ENCODE measurements at regions of chr7 and their contacts with region 1.

Region 1: GRCh38 chr7:17523813-17524741 is 225.6 kb downstream of the AHR start:
- DNase-seq: no peak
- H3K4me3 ChIP-seq: no peak overlapping the region
- H3K27ac ChIP-seq: no peak overlapping the region
- H3K4me1 ChIP-seq: peaks cover 22% of the 10 kb centered on the region
- H3K27me3 ChIP-seq: no peaks in the 10 kb centered on the region
- CTCF ChIP-seq: no peak
- POLR2A ChIP-seq: no peak

Region 2: DNA sequence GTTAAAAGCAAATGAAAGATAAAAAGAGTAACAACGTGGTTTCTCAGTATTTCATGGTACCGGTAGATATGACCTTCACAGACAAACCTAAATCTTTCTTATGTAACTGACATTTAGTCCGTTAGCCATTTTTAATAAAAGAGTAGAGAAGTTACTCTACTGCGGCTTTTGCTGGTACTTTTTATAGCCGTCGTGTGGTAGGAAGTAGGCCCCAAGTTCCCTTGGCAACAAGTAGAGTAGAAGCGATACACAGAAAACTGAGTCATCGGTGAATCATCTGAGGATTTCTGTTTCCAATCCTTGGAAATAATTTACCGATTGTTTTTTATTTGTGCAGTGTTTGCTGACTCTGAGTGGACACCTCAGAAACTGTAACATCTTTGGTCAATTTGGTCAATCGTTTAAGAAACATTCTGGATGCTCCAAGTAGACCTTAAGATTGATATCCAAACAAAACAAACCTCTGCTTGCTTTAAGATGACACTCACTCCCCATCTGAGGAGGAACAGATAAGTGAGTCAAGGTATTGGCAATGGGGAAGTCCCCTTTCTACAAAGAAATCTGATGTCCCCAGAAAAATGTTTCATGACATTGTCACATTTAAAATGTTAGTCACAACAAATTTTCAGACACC is 289.6 kb before region 1 on chr7:
- CTCF ChIA-PET with region 1: no interaction called
- POLR2A ChIA-PET with region 1: no interaction called
- dilution Hi-C with region 1: no loop called
- intact Hi-C with region 1: loop called (anchors 1 kb)
- DNase-seq: peak; percentile 90
- H3K4me3 ChIP-seq: no peak overlapping the region
- H3K27ac ChIP-seq: peak overlapping the region; percentile 76
- H3K4me1 ChIP-seq: peaks cover 28% of the 10 kb centered on the region
- H3K27me3 ChIP-seq: no peaks in the 10 kb centered on the region
- CTCF ChIP-seq: no peak
- POLR2A ChIP-seq: no peak

Region 3: GRCh38 chr7:17304926-17305325 is 219.2 kb before region 1 on chr7:
- CTCF ChIA-PET with region 1: interaction called, 32 read pairs
- POLR2A ChIA-PET with region 1: interaction called, 3 read pairs
- dilution Hi-C with region 1: no loop called
- intact Hi-C with region 1: loop called (anchors 2 kb)
- DNase-seq: peak; percentile 94
- H3K4me3 ChIP-seq: peak overlapping the region in 1 of 3 experiments; percentile 27
- H3K27ac ChIP-seq: peak overlapping the region; percentile 79
- H3K4me1 ChIP-seq: peaks cover 52% of the 10 kb centered on the region
- H3K27me3 ChIP-seq: no peaks in the 10 kb centered on the region
- CTCF ChIP-seq: no peak
- POLR2A ChIP-seq: no peak

Region 4: GRCh38 chr7:17466216-17466615 is 57.9 kb before region 1 on chr7:
- CTCF ChIA-PET with region 1: no interaction called
- POLR2A ChIA-PET with region 1: no interaction called
- dilution Hi-C with region 1: no loop called
- intact Hi-C with region 1: no loop called
- DNase-seq: no peak
- H3K4me3 ChIP-seq: no peak overlapping the region
- H3K27ac ChIP-seq: no peak overlapping the region
- H3K4me1 ChIP-seq: peaks cover 7% of the 10 kb centered on the region
- H3K27me3 ChIP-seq: no peaks in the 10 kb centered on the region
- CTCF ChIP-seq: no peak
- POLR2A ChIP-seq: no peak

Region 5: GRCh38 chr7:17512181-17512675 is 11.8 kb before region 1 on chr7:
- CTCF ChIA-PET with region 1: interaction called, 11 read pairs
- POLR2A ChIA-PET with region 1: no interaction called
- dilution Hi-C with region 1: no loop called
- intact Hi-C with region 1: no loop called
- DNase-seq: no peak
- H3K4me3 ChIP-seq: no peak overlapping the region
- H3K27ac ChIP-seq: no peak overlapping the region
- H3K4me1 ChIP-seq: no peaks in the 10 kb centered on the region
- H3K27me3 ChIP-seq: no peaks in the 10 kb centered on the region
- CTCF ChIP-seq: no peak
- POLR2A ChIP-seq: no peak

Measured in endothelial cell of umbilical vein (primary cell).